ENCODE measurements at regions of chr19 and their contacts with region 1.

Region 1: DNA sequence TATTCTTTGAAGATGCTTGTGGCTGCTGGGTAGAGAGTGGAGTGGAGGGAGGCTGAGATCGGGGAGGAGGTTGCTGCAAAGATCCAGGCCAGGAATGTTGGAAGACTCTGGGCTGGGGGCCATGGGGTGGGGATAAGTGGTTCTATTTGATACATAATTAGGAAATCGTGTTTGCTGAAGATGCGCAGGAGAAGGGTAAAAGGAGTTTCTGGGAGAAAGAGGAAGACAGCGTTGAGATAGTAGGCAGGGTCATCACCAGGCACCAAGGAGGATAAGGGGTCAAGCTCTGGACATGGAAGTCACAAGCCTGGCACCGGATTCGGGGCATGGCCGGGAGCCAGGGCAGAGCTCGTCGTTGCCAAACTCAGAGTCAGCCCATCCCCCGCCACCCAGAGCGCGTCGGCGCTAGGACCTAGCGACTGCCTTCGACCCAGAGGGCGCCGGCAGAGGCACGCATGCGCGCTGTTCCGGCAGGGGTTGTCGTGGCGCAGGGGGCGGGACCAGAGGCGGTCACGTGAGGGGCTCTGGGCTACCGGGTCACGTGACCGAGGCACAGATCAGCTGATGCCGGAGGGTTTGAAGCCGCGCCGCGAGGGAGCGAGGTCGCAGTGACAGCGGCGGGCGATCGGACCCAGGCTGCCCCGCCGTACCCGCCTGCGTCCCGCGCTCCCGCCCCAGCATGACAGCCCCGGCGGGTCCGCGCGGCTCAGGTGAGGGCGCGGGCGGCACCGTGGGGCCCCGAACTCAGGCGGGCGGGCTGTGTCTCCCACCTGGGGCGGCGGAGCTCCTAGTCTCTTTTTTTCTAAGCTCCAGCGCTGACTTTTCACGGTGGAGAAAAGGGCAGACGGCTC is at the start of gene MCOLN1:
- DNase-seq: peak in 1 of 2 experiments; percentile 99
- H3K4me3 ChIP-seq: peak within 1 kb of the TSS; percentile 48 to 79 (median 72)
- H3K27ac ChIP-seq: no peak within 1 kb of the TSS
- H3K4me1 ChIP-seq: peaks cover 0 to 5% (median 1%) of the 10 kb centered on the region in 4 experiments; a peak in 1 of 7 replicates
- H3K27me3 ChIP-seq: no peaks in the 10 kb centered on the region
- CTCF ChIP-seq: no peak
- EP300 ChIP-seq: peak; percentile 58 to 78
- POLR2A ChIP-seq: peak in 1 of 2 experiments; percentile 48; a peak in 1 of 3 replicates
- RAD21 ChIP-seq: peak in 1 of 2 experiments; percentile 28; a peak in 2 of 4 replicates
- total RNA-seq, gene MCOLN1: 15.8 and 19.1 TPM in 2 replicates

Region 2: GRCh38 chr19:7461841-7462750 is 60.2 kb before region 1 on chr19:
- CTCF ChIA-PET with region 1: interaction called, 11 read pairs
- POLR2A ChIA-PET with region 1: no interaction called
- DNase-seq: peak in 1 of 2 experiments; percentile 64
- H3K4me3 ChIP-seq: no peak overlapping the region
- H3K27ac ChIP-seq: no peak overlapping the region
- H3K4me1 ChIP-seq: no peaks in the 10 kb centered on the region
- H3K27me3 ChIP-seq: no peaks in the 10 kb centered on the region; a peak in 1 of 7 replicates
- CTCF ChIP-seq: peak; percentile 34 to 67 (median 45)
- EP300 ChIP-seq: no peak
- POLR2A ChIP-seq: no peak
- RAD21 ChIP-seq: peak; percentile 35 to 51; a peak in 3 of 4 replicates

Region 3: GRCh38 chr19:7535035-7535992 is 13.0 kb after region 1 on chr19 and contains the start of gene PNPLA6:
- CTCF ChIA-PET with region 1: interaction called, 6 read pairs
- POLR2A ChIA-PET with region 1: interaction called, 80 read pairs
- DNase-seq: peak; percentile 71 to 96
- H3K4me3 ChIP-seq: peak within 1 kb of the TSS; percentile 76 to 98 (median 93)
- H3K27ac ChIP-seq: peak within 1 kb of the TSS; percentile 60; the same call in 1 of the 2 replicates
- H3K4me1 ChIP-seq: peaks cover 0 to 6% (median 3%) of the 10 kb centered on the region in 4 experiments; a peak in 4 of 7 replicates
- H3K27me3 ChIP-seq: no peaks in the 10 kb centered on the region
- CTCF ChIP-seq: no peak
- EP300 ChIP-seq: no peak
- POLR2A ChIP-seq: peak in 1 of 2 experiments; percentile 37; a peak in 2 of 3 replicates
- RAD21 ChIP-seq: no peak
- total RNA-seq, gene PNPLA6: 121 and 123 TPM in 2 replicates

Measured in H1 (cell line).